Lower leg skin (tissue), 4 donors: ENCODE measurements at regions of chr15 and their contacts with region 1.

Region 1: GRCh38 chr15:74842581-74843444 is at the start of gene ULK3:
- DNase-seq: peak; percentile 88 to 98
- H3K4me3 ChIP-seq: peak within 1 kb of the TSS; percentile 78
- CTCF ChIP-seq: no peak
- POLR2A ChIP-seq: no peak
- total RNA-seq, gene ULK3: 108 to 189 (median 123) TPM

Region 2: DNA sequence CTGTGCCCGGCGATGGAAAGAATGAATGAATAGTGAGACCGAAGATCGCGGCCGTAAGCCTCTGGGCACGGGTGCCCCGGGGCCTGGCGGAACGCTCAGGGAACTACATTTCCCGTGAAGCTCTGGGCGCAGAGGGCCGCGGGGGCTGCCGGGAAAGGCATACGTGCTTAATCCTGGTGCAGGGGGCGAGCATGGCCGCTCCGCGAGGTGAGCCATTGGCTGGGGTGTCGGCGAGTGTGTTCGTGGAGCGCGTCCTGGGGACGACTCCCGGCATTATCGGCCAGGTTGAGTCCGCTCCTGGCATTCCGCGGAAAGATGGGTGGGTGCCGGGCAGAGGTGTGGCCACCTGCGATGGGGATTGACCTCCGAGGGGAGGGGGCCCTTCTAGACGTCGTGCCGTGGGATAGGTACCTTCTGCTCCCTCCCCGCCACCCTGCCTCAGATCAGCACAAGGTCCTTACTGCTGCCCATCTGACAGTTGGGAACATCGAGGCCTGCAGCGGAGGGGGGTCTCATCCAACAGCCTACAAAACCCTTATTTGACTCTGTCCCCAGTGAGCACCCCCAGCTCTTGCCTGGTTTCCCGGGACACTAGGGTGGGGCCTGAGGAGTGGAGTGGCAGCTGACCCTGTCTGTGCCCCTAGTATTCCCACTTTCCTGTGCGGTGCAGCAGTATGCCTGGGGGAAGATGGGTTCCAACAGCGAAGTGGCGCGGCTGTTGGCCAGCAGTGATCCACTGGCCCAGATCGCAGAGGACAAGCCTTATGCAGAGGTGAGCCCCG is 47.3 kb after region 1 on chr15 and contains the start of gene MPI:
- intact Hi-C with region 1: loop called (anchors 10 kb)
- DNase-seq: peak; percentile 68 to 96
- H3K4me3 ChIP-seq: peak within 1 kb of the TSS; percentile 74
- CTCF ChIP-seq: no peak
- POLR2A ChIP-seq: no peak
- total RNA-seq, gene MPI: 27.6 to 73.1 (median 32.5) TPM